ENCODE measurements at regions of chr19 and their contacts with region 1.

Region 1: DNA sequence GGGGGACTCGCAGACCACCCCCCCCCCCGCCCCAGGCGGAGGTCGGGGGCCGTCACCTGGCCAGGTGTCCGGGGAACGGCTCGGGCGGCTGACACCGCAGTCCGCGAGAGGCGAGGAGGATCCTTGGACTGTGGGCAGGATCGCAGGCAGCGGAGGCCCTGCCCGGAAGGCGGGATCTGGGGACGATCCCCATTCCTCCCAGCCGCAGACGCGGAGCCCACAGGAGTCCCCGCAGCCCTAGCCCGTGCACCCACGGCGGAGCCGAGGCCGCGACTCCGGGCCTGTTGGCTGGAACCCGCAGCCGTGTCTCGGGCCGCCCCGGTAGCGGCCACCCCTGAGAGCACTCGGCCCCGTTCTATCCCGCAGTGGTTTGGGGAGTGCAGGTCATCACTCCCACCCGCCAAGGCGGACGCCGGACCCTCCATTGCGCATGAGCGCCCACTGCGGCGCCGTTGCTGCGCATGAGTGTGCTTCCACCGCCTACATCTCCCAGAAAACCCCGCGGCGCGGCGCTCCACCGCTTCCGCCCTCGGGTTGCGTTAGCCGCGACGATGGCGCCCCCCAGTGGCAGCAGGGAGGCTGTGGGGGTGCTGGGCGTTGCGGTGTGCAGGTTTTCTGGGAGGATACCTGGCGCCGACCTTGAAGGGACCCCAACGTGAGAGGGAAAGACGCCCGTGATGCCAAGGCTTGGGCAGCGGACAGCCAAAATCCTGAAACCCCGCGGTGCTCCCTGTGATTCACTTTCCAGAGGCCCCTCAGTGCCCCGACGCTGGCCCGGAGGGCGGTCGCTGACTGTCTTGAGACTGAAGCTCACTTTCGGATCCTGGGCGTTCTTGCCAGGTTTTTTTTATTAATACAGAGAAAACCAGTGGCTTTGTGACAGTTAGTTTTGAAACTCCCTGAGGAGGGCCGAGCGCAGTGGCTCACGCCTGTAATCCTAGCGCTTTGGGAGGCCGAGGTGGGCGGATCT is 4.4 kb upstream of the ZNF329 start:
- DNase-seq: peak; percentile 94 to 98 (median 97)
- H3K4me3 ChIP-seq: peak overlapping the region; percentile 51 to 86 (median 70)
- H3K27ac ChIP-seq: peak overlapping the region; percentile 41 to 95 (median 90)
- H3K4me1 ChIP-seq: peaks cover 6 to 21% of the 10 kb centered on the region in 2 donors
- H3K27me3 ChIP-seq: no peaks in the 10 kb centered on the region
- CTCF ChIP-seq: peak; percentile 95 to 99 (median 98)
- POLR2A ChIP-seq: peak; percentile 67 to 89

Region 2: DNA sequence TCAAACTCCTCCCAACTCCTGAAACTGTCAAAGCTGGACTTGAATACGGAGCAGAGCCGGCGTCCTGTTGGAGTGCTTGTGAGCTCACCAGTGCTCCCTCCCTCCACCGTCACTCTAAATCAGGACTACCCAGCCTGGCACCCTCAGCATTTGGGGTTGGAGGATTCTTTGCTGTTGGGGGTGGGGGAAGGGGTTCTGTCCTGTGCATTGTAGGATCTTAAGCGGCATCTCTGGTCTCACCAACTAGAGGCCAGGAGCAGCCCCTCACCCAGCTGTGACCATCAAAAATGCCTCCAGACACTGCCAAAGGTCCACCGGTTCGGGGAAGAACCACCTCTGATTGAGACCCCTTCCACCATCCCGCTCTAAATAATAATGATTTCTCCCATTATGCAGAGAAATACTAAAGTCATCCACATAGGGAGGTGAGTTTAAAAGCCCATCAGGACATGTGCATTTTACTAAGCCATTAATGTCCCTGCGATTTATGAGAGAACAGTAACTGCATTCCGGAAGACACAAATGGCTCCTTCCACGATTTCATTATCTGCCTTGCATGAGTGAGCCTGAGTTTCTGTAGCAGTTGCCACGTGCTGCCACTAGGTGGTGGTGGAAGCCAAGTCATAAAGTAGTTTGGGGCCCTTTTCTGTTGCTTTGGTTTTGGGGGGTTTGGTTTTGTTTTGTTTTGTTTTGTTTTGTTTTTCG is 1051.2 kb before region 1 on chr19:
- intact Hi-C with region 1: loop called in 1 of 2 experiments (anchors 2 kb)
- DNase-seq: peak; percentile 54 to 90 (median 71)
- H3K4me3 ChIP-seq: peak overlapping the region in 1 of 4 donors; percentile 27
- H3K27ac ChIP-seq: no peak overlapping the region
- H3K4me1 ChIP-seq: no peaks in the 10 kb centered on the region
- H3K27me3 ChIP-seq: peaks cover 13% of the 10 kb centered on the region
- CTCF ChIP-seq: peak; percentile 79 to 99 (median 88)
- POLR2A ChIP-seq: no peak

Region 3: DNA sequence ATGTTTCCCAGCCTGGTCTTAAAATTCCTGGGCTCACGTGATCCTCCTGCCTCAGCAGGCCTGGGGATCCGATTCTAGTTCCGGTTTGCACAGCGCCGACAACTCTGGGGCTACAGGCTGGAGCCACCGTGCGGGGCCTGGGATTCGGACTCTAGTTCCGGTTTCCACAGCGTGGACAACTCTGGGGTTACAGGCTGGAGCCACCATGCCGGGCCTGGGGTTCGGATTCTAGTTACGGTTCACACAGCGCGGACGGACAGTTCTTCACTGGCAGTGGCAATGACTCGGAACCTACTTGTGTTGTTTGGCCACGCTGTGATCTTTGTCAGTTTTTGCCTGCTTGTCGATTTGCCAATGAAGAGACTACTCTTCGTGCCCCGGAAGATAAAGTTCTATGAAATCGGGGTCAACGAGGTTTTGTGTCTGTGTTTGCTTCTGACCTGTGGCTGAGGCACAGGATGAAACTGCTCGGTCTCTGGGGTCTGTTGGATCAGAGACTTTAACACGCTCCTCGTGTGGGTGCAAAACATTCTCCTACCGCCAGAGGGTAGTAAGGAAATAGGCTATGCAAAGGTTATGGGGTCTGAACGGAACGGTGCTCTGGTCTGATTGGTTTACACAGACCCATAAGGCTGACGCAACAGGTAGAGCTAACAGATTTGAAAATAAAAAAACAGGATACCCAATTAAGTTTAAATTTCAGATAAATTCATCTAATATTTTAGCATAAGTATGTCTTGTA is 133.3 kb before region 1 on chr19:
- intact Hi-C with region 1: loop called in 1 of 2 experiments (anchors 5 kb)
- DNase-seq: peak; percentile 25 to 84 (median 40)
- H3K4me3 ChIP-seq: no peak overlapping the region
- H3K27ac ChIP-seq: no peak overlapping the region
- H3K4me1 ChIP-seq: no peaks in the 10 kb centered on the region
- H3K27me3 ChIP-seq: no peaks in the 10 kb centered on the region
- CTCF ChIP-seq: peak in 5 of 6 experiments; percentile 52 to 68 (median 61)
- POLR2A ChIP-seq: no peak

Region 4: GRCh38 chr19:58042495-58043340 is 112.2 kb before region 1 on chr19:
- intact Hi-C with region 1: no loop called
- DNase-seq: no peak
- H3K4me3 ChIP-seq: no peak overlapping the region
- H3K27ac ChIP-seq: no peak overlapping the region
- H3K4me1 ChIP-seq: no peaks in the 10 kb centered on the region
- H3K27me3 ChIP-seq: no peaks in the 10 kb centered on the region
- CTCF ChIP-seq: no peak
- POLR2A ChIP-seq: no peak

Measured in adrenal gland (tissue), 19 donors.